Psoas muscle (tissue), 8 donors: ENCODE measurements at regions of chr4 and their contacts with region 1.

Region 1: GRCh38 chr4:139239127-139239772 is 40.8 kb downstream of the MGARP start:
- DNase-seq: no peak
- ATAC-seq: no peak
- H3K4me3 ChIP-seq: no peak overlapping the region
- H3K27ac ChIP-seq: no peak overlapping the region
- H3K4me1 ChIP-seq: peaks cover 15% of the 10 kb centered on the region
- H3K27me3 ChIP-seq: no peaks in the 10 kb centered on the region
- CTCF ChIP-seq: no peak

Region 2: GRCh38 chr4:139279760-139280620 is 40.7 kb after region 1 on chr4 and contains the start of gene MGARP:
- intact Hi-C with region 1: loop called in 1 of 2 experiments (anchors 5 kb)
- DNase-seq: peak in 1 of 2 donors; percentile 31
- ATAC-seq: peak in 3 of 4 donors; percentile 36 to 65 (median 38)
- H3K4me3 ChIP-seq: peak within 1 kb of the TSS; percentile 60
- H3K27ac ChIP-seq: no peak within 1 kb of the TSS
- H3K4me1 ChIP-seq: no peaks in the 10 kb centered on the region
- H3K27me3 ChIP-seq: peaks cover 0 to 6% (median 2%) of the 10 kb centered on the region in 3 donors
- CTCF ChIP-seq: no peak
- total RNA-seq, gene MGARP: 0.26 to 1.0 (median 0.34) TPM in 3 of 4 donors, not detected in the other